GM10248 (cell line): ENCODE measurements at regions of chr19 and their contacts with region 1.

Region 1: DNA sequence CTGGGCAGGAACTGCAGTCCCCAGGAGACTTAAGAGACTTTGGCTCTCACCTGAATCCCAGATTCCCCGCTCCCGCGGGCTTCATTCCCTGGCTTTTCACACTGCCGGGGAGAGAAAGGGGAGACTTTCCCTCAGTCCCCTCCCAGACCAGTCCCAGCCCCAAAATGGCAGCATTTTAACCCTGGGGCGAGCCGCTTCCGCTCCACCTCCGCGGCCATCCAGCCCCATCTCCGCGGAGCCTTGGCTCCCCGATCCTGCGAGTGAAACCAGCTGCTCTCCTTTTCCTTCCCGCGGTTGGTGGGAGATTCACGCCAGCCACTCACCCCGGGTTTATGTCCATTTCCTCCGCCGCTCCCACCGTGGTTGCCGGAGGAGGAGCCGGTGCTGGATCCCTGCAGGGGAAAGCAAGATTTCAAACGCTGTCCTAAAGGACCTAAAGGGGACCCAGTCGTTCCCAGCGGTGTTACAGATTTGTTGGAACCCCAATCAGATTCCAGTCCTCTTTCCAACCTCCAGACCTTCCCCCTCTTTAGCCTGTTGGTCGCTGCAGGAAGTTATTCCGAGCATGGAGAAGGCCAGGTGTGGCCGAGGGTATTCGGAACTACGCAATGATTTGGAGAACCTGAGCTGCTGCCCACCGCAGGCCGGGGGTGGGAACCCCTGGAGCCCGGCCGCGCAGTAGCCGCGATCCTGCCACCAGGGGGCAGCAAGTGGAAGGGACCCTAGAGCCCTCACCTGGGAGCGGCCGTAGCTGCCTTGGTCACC is 3.4 kb downstream of the DMKN start:
- DNase-seq: peak; percentile 93
- CTCF ChIP-seq: peak; percentile 94

Region 2: DNA sequence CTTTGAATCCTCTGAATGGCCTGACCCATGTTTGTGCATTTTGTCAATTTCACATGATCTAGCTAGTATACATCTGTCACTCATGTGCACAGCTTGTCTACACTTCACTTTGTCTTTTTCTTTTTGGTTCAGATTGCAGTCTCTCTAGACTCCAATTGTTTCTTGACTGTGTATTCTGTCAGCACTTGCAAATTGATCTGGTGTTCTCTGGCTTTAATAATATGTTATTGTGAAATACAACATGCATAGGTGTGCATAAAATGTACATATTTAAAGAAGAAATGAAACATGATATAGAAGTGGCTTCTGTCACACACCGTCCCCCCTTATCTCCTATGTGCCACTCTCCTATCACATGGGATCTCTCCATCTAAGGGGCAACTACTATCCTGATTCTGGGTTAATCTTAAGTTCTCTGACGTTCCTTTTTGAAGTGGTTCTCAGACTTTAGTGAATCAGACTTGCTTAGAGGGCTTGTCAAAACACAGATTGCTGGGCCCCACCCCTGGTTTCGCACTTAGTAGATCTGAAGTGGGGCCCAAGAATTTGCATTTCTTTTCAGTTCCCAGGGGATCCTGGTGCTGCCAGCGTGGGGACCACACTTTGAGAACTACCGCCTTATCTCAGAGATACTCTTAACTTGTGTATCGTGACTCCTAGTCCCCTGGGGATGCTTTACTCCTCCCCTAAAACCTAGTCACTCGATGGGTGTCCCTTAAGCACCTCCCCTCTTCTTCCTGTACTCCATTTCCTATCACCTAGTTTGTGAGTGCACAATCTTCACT is 25.6 kb before region 1 on chr19:
- CTCF ChIA-PET with region 1: interaction called, 12 read pairs
- POLR2A ChIA-PET with region 1: no interaction called
- DNase-seq: peak; percentile 81
- CTCF ChIP-seq: no peak

Region 3: DNA sequence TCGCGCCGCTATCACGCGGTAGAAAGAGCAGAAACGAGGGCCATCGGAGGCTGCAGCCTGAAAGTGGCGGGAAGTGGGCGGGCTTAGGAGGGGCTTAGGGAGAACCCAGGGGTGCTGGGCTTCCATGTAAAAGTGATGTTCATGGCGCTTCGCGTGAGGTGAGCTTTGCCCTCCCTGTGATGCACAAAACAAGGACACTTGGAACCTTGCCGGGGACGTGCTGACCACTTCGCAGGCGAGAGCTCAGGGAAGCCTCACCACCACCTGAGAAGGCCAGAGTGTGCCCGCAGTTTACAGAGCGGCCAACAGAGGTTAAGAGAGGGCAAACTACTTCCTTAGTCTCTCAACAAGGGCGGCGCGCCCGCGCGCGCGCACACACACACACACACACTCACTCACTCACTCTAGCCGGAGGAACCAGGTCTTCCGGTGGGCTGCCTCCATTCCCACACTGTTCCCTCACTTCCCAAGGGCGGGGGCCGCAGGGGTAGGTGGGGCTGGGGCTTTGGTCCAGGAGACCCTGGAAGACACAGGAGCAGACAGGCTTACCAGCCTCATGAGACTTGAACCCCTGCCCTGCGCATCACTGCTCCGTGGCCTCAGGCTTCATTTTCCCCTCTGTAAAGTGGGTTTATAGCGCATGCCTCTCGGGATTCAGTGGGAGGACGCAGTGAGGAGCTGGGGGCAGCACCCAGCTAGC is 23.9 kb after region 1 on chr19:
- CTCF ChIA-PET with region 1: interaction called, 14 read pairs
- POLR2A ChIA-PET with region 1: no interaction called
- DNase-seq: peak; percentile 48
- CTCF ChIP-seq: no peak

Region 4: GRCh38 chr19:35557539-35558399 is 47.7 kb after region 1 on chr19:
- CTCF ChIA-PET with region 1: interaction called, 10 read pairs
- POLR2A ChIA-PET with region 1: no interaction called
- DNase-seq: peak; percentile 72
- CTCF ChIP-seq: peak; percentile 3

Region 5: GRCh38 chr19:35592226-35592625 is 82.2 kb after region 1 on chr19:
- CTCF ChIA-PET with region 1: interaction called, 40 read pairs
- POLR2A ChIA-PET with region 1: no interaction called
- DNase-seq: peak; percentile 66
- CTCF ChIP-seq: peak; percentile 53